ENCODE measurements at regions of chr22 and their contacts with region 1.

Region 1: GRCh38 chr22:24434471-24435322 is 7.3 kb downstream of the ADORA2A start:
- H3K4me3 Mint-ChIP-seq: no peak overlapping the region
- H3K27ac Mint-ChIP-seq: peak overlapping the region; percentile 81
- H3K4me1 Mint-ChIP-seq: peaks cover 84% of the 10 kb centered on the region
- H3K27me3 Mint-ChIP-seq: no peaks in the 10 kb centered on the region

Region 2: DNA sequence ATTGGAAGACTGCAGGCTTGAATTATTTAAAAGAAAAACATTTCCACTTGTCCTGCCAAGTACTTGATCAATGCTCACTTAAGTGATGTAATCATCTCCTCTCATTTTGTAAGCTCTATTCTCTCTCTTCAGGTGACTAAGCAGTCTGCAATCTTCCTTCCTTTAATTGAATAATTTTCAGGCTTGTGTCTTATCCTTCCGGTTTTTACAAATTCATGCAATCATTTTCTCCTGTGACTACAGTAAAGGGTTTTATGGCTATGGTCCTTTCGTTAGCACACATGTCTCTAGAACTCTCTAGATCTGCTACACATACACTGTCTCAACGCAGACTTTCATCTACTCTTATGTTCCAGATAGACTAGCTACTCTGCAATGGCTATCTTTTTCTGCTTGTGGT is 47.9 kb after region 1 on chr22:
- intact Hi-C with region 1: loop called (anchors 5 kb)
- H3K4me3 Mint-ChIP-seq: no peak overlapping the region
- H3K27ac Mint-ChIP-seq: no peak overlapping the region
- H3K4me1 Mint-ChIP-seq: peaks cover 42% of the 10 kb centered on the region
- H3K27me3 Mint-ChIP-seq: no peaks in the 10 kb centered on the region